Transverse colon (tissue), 4 donors: ENCODE measurements at regions of chr7 and their contacts with region 1.

Region 1: GRCh38 chr7:85023045-85023712 is 163.7 kb downstream of the SEMA3D start:
- DNase-seq: no peak
- H3K4me3 ChIP-seq: no peak overlapping the region
- H3K27ac ChIP-seq: no peak overlapping the region
- H3K4me1 ChIP-seq: peaks cover 0 to 5% (median 0%) of the 10 kb centered on the region in 4 donors
- H3K27me3 ChIP-seq: no peaks in the 10 kb centered on the region
- CTCF ChIP-seq: peak; percentile 58 to 73 (median 66)
- EP300 ChIP-seq: no peak
- POLR2A ChIP-seq: no peak

Region 2: GRCh38 chr7:83457022-83457892 is 1565.9 kb before region 1 on chr7:
- in situ Hi-C with region 1: no loop called
- intact Hi-C with region 1: loop called (anchors 5 kb)
- DNase-seq: no peak
- H3K4me3 ChIP-seq: no peak overlapping the region
- H3K27ac ChIP-seq: no peak overlapping the region
- H3K4me1 ChIP-seq: no peaks in the 10 kb centered on the region
- H3K27me3 ChIP-seq: no peaks in the 10 kb centered on the region
- CTCF ChIP-seq: no peak
- EP300 ChIP-seq: no peak
- POLR2A ChIP-seq: no peak

Region 3: GRCh38 chr7:83936056-83936708 is 1087.0 kb before region 1 on chr7:
- in situ Hi-C with region 1: loop called in 3 of 4 experiments (anchors 10 kb)
- intact Hi-C with region 1: loop called (anchors 2 kb)
- DNase-seq: peak; percentile 47
- H3K4me3 ChIP-seq: no peak overlapping the region
- H3K27ac ChIP-seq: no peak overlapping the region
- H3K4me1 ChIP-seq: no peaks in the 10 kb centered on the region
- H3K27me3 ChIP-seq: no peaks in the 10 kb centered on the region
- CTCF ChIP-seq: peak; percentile 59 to 82 (median 78)
- EP300 ChIP-seq: no peak
- POLR2A ChIP-seq: no peak

Region 4: GRCh38 chr7:83947260-83947659 is 1075.9 kb before region 1 on chr7:
- in situ Hi-C with region 1: loop called in 2 of 4 experiments (anchors 10 kb)
- intact Hi-C with region 1: no loop called
- DNase-seq: peak; percentile 8
- H3K4me3 ChIP-seq: no peak overlapping the region
- H3K27ac ChIP-seq: no peak overlapping the region
- H3K4me1 ChIP-seq: no peaks in the 10 kb centered on the region
- H3K27me3 ChIP-seq: no peaks in the 10 kb centered on the region
- CTCF ChIP-seq: peak in 2 of 5 experiments; percentile 13 to 29
- EP300 ChIP-seq: no peak
- POLR2A ChIP-seq: no peak

Region 5: GRCh38 chr7:83957333-83957732 is 1065.8 kb before region 1 on chr7:
- in situ Hi-C with region 1: loop called in 1 of 4 experiments (anchors 10 kb)
- intact Hi-C with region 1: no loop called
- DNase-seq: no peak
- H3K4me3 ChIP-seq: no peak overlapping the region
- H3K27ac ChIP-seq: no peak overlapping the region
- H3K4me1 ChIP-seq: no peaks in the 10 kb centered on the region
- H3K27me3 ChIP-seq: no peaks in the 10 kb centered on the region
- CTCF ChIP-seq: no peak
- EP300 ChIP-seq: no peak
- POLR2A ChIP-seq: no peak

Region 6: DNA sequence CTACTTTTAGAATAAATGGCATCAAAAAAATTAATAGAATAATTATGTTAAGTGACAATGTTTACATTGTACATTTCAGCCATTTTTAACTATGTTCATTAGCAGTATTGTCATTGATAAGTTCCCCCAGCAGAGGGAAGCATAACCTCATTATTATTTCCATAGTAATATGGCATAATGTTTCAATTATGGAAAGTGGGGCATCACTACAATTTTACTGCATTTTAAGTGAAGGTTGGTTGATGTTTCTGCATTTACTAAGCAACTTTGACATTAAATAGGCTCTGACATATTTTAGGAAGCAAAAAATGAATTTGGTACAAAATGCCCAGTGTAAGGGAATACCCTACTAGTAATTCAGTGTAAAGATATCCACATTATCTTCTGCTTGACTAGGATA is 1046.9 kb before region 1 on chr7:
- in situ Hi-C with region 1: loop called in 2 of 4 experiments (anchors 5 kb)
- intact Hi-C with region 1: no loop called
- DNase-seq: no peak
- H3K4me3 ChIP-seq: no peak overlapping the region
- H3K27ac ChIP-seq: no peak overlapping the region
- H3K4me1 ChIP-seq: peaks cover 0 to 2% (median 0%) of the 10 kb centered on the region in 4 donors
- H3K27me3 ChIP-seq: no peaks in the 10 kb centered on the region
- CTCF ChIP-seq: peak; percentile 57 to 75 (median 67)
- EP300 ChIP-seq: no peak
- POLR2A ChIP-seq: no peak

Region 7: GRCh38 chr7:84194543-84195271 is 828.5 kb before region 1 on chr7 and contains the start of gene SEMA3A:
- in situ Hi-C with region 1: loop called in 2 of 4 experiments (anchors 25 kb)
- intact Hi-C with region 1: no loop called
- DNase-seq: peak; percentile 18
- H3K4me3 ChIP-seq: peak within 1 kb of the TSS; percentile 25 to 54 (median 36)
- H3K27ac ChIP-seq: peak within 1 kb of the TSS; percentile 62 to 84 (median 66)
- H3K4me1 ChIP-seq: no peaks in the 10 kb centered on the region
- H3K27me3 ChIP-seq: no peaks in the 10 kb centered on the region
- CTCF ChIP-seq: peak in 2 of 5 experiments; percentile 10 to 14
- EP300 ChIP-seq: no peak
- POLR2A ChIP-seq: peak; percentile 19
- total RNA-seq, gene SEMA3A: 1.00 to 8.3 (median 4.7) TPM

Region 8: DNA sequence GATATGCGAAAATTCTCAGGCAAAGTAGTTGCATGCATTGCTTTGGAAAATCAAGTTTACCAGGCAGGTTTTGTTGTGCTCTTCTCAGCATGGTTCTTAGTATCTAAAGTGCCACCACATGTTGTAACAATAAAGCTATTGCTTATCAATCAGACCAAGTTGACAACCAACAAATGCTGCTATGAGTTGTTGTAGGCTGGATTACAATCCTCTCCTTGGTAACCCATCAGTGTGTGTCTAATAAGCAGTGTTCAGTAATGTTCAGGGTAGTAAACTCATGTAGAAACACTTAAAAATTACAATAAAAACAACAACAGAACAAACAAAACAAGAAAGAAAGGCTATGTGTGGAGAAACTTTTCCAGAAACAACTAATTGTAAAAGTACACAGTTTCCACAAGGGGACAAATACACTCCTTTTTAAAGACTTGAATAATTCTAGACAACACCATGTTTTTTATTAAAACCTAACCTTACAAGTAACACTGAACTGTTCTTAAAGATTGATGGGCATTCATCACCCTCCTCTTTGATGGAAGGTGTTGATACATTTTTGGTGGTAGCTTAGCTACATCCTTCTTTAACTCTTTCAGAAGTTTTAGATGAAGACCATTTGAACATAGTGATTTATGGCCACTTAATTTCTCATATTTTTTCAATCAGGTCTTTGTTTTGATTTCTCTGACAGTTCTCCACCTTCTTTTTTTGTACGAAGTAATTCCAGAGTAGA is 457.7 kb before region 1 on chr7:
- in situ Hi-C with region 1: no loop called
- intact Hi-C with region 1: no loop called
- DNase-seq: no peak
- H3K4me3 ChIP-seq: no peak overlapping the region
- H3K27ac ChIP-seq: no peak overlapping the region
- H3K4me1 ChIP-seq: no peaks in the 10 kb centered on the region
- H3K27me3 ChIP-seq: no peaks in the 10 kb centered on the region
- CTCF ChIP-seq: no peak
- EP300 ChIP-seq: no peak
- POLR2A ChIP-seq: no peak

Region 9: DNA sequence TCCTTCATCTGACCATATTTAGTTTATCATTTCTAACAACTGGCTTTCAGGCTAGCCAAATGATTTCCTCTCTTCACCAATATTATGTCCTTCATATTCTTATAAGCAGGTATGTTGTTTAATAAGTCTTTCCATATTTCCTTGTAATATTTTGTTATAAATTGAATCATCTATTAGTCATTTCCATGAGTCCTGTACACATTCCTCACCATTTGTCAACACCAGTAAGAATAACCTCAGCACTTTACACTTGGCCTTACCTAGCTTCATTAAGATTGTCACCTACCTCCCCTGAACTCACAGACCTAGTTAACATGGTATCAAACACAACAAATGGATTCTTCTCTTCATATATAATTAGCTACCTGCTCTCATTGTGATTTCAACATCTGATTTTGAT is 118.6 kb before region 1 on chr7:
- in situ Hi-C with region 1: no loop called
- intact Hi-C with region 1: no loop called
- DNase-seq: no peak
- H3K4me3 ChIP-seq: no peak overlapping the region
- H3K27ac ChIP-seq: no peak overlapping the region
- H3K4me1 ChIP-seq: no peaks in the 10 kb centered on the region
- H3K27me3 ChIP-seq: no peaks in the 10 kb centered on the region
- CTCF ChIP-seq: no peak
- EP300 ChIP-seq: no peak
- POLR2A ChIP-seq: no peak

Region 10: DNA sequence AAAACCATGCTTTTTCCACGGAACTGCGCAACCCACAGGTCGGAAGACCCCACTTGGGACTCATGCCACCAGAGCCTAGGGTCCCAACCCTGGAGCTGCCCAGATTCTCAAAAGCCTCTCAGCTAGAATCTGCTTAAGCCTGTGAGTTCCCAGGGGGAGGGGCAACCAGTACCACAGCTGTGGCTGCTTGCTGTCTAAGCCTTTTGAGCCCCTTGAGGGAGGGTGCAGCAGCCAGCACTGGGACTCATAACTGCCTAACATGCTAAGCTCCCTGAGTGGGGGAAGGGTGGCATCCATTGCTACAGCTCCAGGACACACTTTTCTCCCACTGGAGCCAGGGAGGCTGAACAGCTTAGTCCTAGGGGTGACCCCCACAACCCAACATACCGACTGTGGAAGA is 1134.9 kb after region 1 on chr7:
- in situ Hi-C with region 1: no loop called
- intact Hi-C with region 1: no loop called
- DNase-seq: no peak
- H3K4me3 ChIP-seq: no peak overlapping the region
- H3K27ac ChIP-seq: no peak overlapping the region
- H3K4me1 ChIP-seq: no peaks in the 10 kb centered on the region
- H3K27me3 ChIP-seq: no peaks in the 10 kb centered on the region
- CTCF ChIP-seq: no peak
- EP300 ChIP-seq: no peak
- POLR2A ChIP-seq: no peak